Activated CD4-positive, alpha-beta T cell treated with anti-CD3 and anti-CD28 coated beads for 36 hours (primary cell): ENCODE measurements at regions of chr22 and their contacts with region 1.

Region 1: DNA sequence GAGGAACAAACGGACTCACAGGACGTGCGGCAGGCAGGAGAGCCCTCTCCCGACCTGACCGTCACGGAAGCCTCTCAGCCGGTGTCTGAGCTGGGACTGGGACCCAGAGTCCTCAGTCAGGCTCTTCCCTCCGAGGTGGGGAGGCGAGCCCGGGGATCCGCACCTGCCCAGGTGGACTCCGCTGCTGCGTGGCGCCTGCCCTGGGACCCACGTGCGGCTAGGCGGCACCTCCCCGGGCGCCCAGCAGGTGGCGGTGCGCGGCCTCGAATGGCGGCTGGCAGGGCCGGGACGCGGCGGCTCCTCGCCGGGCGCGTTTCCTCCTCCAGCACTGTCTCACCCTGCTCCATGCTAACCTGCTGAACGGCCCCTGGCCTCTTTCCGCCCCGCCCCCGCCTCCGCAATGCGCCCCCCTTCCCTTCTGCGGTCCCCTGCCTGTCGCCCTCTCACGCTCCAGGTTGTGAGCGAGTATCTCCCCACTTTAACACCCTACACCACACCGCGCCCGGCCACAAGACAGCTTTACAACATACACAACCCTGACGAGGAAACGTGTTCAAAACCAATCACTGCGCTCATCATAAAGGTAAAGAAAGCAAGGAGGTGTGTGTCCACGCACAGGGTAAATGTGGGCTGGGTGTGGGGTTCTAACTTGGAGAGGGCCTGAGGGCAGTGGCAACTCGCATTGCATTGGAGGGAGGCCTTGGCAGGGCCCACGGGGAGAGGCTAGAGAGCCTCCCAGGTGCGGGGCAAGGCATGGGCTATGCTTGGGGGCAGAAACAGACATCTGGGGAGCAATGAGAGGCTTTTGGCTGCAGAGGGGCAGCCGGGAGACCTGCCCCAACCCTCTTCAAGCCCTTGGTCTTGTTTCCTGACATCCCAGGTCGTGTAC is 25.9 kb upstream of the ATXN10 start:
- DNase-seq: peak; percentile 88
- ATAC-seq: peak; percentile 96
- H3K4me3 Mint-ChIP-seq: no peak overlapping the region
- H3K27ac Mint-ChIP-seq: no peak overlapping the region
- H3K4me1 Mint-ChIP-seq: peaks cover 3% of the 10 kb centered on the region
- H3K27me3 Mint-ChIP-seq: peaks cover 41% of the 10 kb centered on the region

Region 2: DNA sequence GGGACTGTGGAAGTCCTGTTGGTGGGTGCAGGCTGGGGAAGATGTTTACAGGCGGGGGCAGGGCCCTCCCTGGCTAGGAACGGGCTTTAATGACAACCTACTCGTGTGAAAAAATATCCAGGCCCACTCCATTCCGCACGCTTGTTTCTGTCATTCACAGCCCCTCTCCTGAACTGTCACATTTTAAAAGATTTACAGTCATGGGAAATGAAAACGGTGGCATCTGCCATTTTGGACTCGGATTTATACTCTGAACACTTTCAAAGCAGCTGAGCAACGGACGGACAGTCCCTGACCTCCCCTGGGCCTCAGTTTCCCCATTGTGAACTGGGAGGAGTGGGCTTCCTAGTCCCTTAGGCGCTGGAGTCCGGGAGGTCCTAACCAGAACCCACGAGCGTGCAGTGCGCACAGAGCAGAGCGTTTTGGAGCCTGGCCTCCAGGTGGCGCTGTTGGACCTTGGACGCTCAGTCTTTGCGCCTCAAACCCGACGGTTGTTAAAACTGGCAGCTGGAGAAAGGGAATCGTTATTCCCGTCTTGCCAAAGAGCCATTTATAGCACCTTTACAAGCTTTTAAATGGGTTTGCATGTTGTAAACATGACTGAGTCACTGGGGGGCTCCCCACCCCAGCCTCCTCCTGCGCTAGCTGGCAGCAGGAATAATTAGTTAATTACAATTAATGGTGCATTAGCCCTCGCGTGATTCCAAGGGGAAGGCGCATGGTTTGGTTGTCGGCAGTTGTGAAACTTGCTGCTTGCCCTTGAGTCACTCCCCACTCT is 67.8 kb before region 1 on chr22:
- CTCF ChIA-PET with region 1: interaction called, 6 read pairs
- POLR2A ChIA-PET with region 1: no interaction called
- intact Hi-C with region 1: loop called (anchors 1 to 5 kb)
- DNase-seq: peak; percentile 89
- ATAC-seq: peak; percentile 71
- H3K4me3 Mint-ChIP-seq: no peak overlapping the region
- H3K27ac Mint-ChIP-seq: no peak overlapping the region
- H3K4me1 Mint-ChIP-seq: no peaks in the 10 kb centered on the region
- H3K27me3 Mint-ChIP-seq: peaks cover 11% of the 10 kb centered on the region